CD8-positive, alpha-beta memory T cell (primary cell): ENCODE measurements at regions of chr7 and their contacts with region 1.

Region 1: GRCh38 chr7:17769918-17770317 is 170.4 kb downstream of the SNX13 start:
- DNase-seq: peak; percentile 20 to 66 (median 26)
- H3K4me3 ChIP-seq: no peak overlapping the region
- H3K4me3 Mint-ChIP-seq: no peak overlapping the region
- H3K27ac ChIP-seq: no peak overlapping the region
- H3K27ac Mint-ChIP-seq: no peak overlapping the region
- H3K4me1 ChIP-seq: no peaks in the 10 kb centered on the region
- H3K4me1 Mint-ChIP-seq: peaks cover 4 to 10% (median 9%) of the 10 kb centered on the region in 3 donors
- H3K27me3 ChIP-seq: no peaks in the 10 kb centered on the region
- H3K27me3 Mint-ChIP-seq: no peaks in the 10 kb centered on the region

Region 2: DNA sequence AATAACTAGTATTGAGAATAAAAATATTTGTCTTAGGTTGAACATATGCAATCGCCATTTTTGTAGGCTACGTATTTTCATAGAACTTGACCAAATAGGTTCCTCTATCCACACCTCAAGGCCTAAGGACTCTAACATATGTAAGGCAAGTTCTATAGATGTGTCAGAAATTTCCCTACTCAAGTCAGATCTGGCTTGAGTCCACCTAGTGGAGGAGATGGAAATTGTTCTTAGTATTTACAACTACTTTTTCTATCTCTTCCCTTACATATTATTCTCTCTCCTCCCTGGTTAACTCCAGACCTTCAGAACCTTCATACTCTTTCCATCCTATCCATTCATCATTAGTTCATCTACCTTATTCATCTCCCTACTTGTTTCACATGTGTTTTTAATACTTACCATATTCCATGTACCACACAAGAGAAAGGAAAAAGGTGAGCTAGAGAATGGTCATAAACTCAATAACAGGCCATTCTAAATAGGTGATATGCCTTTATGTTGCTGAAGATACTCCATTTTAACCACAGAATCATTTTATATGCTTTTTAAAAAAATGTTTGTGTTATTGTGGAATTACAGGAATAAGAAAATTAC is 551.2 kb after region 1 on chr7:
- CTCF ChIA-PET with region 1: interaction called, 12 read pairs
- POLR2A ChIA-PET with region 1: no interaction called
- DNase-seq: peak in 1 of 5 donors; percentile 7
- H3K4me3 ChIP-seq: no peak overlapping the region
- H3K4me3 Mint-ChIP-seq: no peak overlapping the region
- H3K27ac ChIP-seq: no peak overlapping the region
- H3K27ac Mint-ChIP-seq: no peak overlapping the region
- H3K4me1 ChIP-seq: no peaks in the 10 kb centered on the region
- H3K4me1 Mint-ChIP-seq: peaks cover 1 to 19% (median 8%) of the 10 kb centered on the region in 3 donors
- H3K27me3 ChIP-seq: no peaks in the 10 kb centered on the region
- H3K27me3 Mint-ChIP-seq: no peaks in the 10 kb centered on the region

Region 3: GRCh38 chr7:18345641-18346234 is 575.8 kb after region 1 on chr7:
- CTCF ChIA-PET with region 1: interaction called, 15 read pairs
- POLR2A ChIA-PET with region 1: no interaction called
- DNase-seq: peak in 3 of 5 donors; percentile 12 to 21 (median 13)
- H3K4me3 ChIP-seq: no peak overlapping the region
- H3K4me3 Mint-ChIP-seq: no peak overlapping the region
- H3K27ac ChIP-seq: no peak overlapping the region
- H3K27ac Mint-ChIP-seq: no peak overlapping the region
- H3K4me1 ChIP-seq: no peaks in the 10 kb centered on the region
- H3K4me1 Mint-ChIP-seq: no peaks in the 10 kb centered on the region
- H3K27me3 ChIP-seq: no peaks in the 10 kb centered on the region
- H3K27me3 Mint-ChIP-seq: peaks cover 0 to 3% of the 10 kb centered on the region in 2 donors